Posterior vena cava (tissue), 2 donors: ENCODE measurements at regions of chr2 and their contacts with region 1.

Region 1: GRCh38 chr2:73112913-73113633 is at the start of gene RAB11FIP5:
- DNase-seq: peak; percentile 91
- total RNA-seq, gene RAB11FIP5: 29.3 to 39.2 TPM

Region 2: GRCh38 chr2:73085691-73086360 is 27.2 kb before region 1 on chr2:
- intact Hi-C with region 1: loop called in 1 of 2 experiments (anchors 1 kb)
- DNase-seq: peak; percentile 96

Region 3: DNA sequence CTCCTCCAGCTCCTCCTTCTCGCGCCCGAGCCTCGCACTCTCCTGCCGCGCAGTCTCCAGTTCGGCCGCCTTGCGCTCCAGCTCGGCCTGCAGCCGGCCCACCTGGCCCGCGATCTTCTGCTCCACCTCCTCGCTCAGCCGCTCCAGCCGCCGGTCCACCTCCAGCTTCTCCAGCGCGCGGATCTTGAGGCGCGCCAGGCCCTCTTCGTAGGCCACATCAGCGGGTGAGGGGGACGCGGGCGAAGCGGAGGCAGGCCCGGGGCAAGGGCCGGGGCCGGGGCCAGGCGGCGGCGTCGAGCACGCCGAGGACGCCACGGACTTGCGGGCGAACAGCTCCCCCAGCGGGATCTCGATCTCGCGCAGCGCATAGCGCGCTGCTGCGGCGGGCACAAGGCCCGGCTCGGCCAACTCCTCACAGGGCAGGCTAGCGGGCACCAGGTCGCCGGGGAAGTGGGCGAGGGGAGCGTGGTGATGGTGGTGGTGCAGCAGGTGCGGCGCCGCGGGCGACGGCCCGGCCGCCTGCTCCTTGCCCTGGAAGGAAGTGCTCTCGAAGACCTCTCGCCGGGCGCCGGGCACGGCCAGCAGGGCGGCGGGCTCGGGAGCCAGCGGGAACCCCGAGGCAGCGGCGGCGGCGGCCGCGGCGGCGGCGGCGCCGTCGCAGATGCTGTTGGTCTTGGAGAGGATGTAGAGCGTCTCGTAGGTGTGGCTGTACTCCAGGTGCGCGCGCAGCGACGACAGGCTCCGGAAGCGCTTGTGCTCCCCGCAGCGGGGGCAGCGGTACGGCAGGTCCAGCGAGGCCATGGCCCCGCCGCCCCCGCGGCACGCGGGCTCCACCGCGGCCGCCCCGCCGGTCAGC is 156.0 kb after region 1 on chr2:
- intact Hi-C with region 1: no loop called
- DNase-seq: peak; percentile 80